A549 (cell line): ENCODE measurements at regions of chr15 and their contacts with region 1.

Region 1: DNA sequence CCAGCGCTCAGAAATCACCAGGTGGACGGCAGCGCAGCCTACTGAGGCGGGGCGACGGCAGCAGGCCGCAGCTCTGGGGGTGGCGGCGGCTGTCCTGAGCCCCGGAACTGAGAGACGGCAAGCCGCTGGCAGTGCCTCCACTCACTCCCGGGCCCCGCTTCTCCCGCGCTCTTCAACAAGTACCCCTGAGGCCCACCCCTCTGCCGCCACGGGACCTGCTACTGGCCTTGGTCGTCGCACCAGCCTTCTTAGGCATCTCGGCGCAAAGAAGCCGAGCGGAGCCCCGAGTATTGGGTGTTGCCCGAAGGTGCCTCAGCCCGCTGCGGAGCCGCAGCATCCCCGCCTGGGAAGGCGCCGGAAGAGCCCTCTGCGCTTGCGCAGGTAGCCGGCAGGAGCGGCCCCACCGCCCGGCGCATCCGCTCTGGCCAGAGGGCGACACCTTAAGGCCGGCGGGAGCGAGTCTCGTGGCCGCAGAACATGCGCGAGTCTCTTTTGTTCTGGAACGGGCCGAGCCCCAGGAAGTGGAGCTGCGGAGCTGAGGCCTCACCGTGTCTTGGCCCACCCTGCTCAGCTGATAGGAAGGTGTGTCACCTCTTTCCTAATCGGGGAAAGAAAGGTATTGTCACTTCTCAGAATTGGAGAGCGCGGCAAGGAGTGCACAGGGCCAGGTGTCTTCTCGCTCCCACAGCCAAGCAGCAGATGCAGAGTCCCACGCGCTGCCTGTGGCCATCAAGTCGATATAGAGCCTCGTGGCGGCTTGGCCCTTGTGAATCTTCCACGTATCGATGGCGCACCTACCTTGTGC is at the start of gene C15orf40:
- DNase-seq: peak; percentile 94 to 95
- ATAC-seq: peak; percentile 93 to 96
- H3K4me3 ChIP-seq: peak within 1 kb of the TSS; percentile 72
- H3K27ac ChIP-seq: peak within 1 kb of the TSS; percentile 78 to 92
- H3K4me1 ChIP-seq: peaks cover 26% of the 10 kb centered on the region
- CTCF ChIP-seq: peak; percentile 71
- EP300 ChIP-seq: no peak
- POLR2A ChIP-seq: peak; percentile 72
- RAD21 ChIP-seq: peak in 1 of 2 experiments; percentile 33; a peak in 1 of 5 replicates
- polyA plus RNA-seq, gene C15orf40: 48.0 and 54.1 TPM in 2 replicates

Region 2: DNA sequence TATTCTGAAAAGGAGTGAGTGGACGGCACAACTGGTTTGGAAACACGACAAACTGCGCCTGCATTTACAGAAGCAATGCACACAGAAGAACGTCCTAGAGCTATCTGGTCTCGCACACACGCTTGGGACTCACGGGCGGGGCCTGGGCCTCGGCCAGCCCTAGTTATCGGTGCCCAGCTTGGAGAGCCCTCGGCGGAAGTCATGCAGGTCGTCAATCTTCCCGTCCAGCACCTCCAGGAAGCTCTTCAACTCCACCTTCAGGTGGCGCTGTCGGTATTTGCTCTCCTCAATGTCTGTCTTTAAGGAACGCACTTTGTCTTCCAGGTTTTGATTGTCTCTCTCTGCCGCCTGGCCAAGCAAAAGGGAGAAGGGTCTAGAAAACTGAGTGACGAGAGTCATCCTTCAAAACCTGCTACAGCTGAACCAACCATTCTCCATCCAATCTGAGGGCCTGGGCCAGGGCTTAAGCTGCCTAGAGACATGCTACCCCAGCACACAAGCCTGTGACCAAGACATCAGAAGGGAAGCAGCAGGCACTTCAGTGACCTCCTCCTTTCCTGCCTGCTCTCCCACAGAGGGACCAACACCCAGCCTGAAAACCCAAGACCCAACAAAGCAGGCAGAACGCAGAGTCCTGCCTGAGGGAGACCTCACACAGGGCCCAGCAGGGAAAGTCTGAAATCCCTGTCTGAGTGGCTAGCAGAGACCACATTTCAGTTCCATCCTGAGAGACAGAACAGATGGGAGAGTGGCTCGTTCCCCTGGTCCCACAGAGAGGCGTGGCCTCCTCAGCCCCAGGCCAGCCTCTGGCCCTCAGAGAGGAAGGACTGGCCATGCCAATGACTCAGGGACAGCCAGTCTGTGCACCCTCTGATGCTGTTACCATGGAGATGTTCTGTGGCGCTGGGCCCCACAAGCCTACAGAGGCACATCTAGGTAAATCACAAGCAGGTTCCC is 161.6 kb before region 1 on chr15:
- CTCF ChIA-PET with region 1: interaction called, 17 read pairs
- POLR2A ChIA-PET with region 1: no interaction called
- DNase-seq: peak; percentile 57 to 87
- ATAC-seq: peak; percentile 67 to 93
- H3K4me3 ChIP-seq: no peak overlapping the region
- H3K27ac ChIP-seq: no peak overlapping the region
- H3K4me1 ChIP-seq: no peaks in the 10 kb centered on the region
- CTCF ChIP-seq: peak; percentile 59
- EP300 ChIP-seq: no peak
- POLR2A ChIP-seq: no peak
- RAD21 ChIP-seq: peak; percentile 62 to 79

Region 3: DNA sequence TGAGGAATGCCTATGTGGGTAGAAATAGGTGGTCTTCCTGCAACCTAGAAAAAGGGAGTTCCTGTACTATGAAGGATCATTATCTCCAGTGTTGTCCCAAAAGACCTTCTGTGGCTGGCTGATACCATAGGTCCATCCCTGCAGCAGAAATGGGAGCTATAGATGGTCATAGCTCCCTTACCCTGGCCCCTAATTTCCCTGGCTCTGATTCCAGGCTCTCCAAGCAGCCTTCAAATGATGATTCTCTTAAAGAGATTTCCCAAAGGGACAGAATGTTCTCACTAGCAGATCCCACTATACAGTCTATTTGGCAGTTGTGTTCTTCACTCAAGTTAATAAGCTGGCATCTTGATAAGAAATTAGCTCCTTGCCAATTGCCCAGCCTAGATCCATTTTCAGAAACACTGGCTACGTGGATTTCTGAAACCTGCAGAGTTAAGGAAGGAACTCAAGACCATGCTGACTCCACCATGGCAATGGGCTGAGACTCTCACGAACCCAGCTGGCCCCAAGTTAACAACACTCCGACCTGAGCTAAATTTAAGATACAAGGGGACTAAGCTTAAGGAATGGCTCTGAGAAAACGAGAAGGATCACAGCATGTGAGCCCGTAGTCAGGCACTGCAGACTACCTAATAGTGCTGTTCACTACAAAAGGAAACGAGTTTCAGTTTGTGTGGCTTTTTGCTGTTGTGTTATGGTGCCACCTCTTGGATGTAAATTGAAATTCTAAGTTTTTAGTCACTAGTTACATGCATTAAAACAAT is 11.4 kb before region 1 on chr15:
- CTCF ChIA-PET with region 1: interaction called, 38 read pairs
- POLR2A ChIA-PET with region 1: interaction called, 3 read pairs
- DNase-seq: peak; percentile 54 to 69
- ATAC-seq: peak; percentile 87 to 88
- H3K4me3 ChIP-seq: peak overlapping the region; percentile 30; the same call in 2 of the 3 replicates
- H3K27ac ChIP-seq: peak overlapping the region; percentile 46 to 61; a peak in 4 of 6 replicates
- H3K4me1 ChIP-seq: peaks cover 4% of the 10 kb centered on the region; the same call in 1 of the 3 replicates
- CTCF ChIP-seq: peak; percentile 88
- EP300 ChIP-seq: no peak
- POLR2A ChIP-seq: no peak
- RAD21 ChIP-seq: peak; percentile 86 to 90

Region 4: GRCh38 chr15:83066734-83067637 is 55.5 kb after region 1 on chr15 and contains the start of gene BTBD1:
- CTCF ChIA-PET with region 1: interaction called, 6 read pairs
- POLR2A ChIA-PET with region 1: interaction called, 15 read pairs
- DNase-seq: peak; percentile 95 to 99
- ATAC-seq: peak; percentile 96 to 97
- H3K4me3 ChIP-seq: peak within 1 kb of the TSS; percentile 80
- H3K27ac ChIP-seq: peak within 1 kb of the TSS; percentile 98
- H3K4me1 ChIP-seq: peaks cover 34% of the 10 kb centered on the region
- CTCF ChIP-seq: no peak; the same call in 2 of the 3 replicates
- EP300 ChIP-seq: no peak; a peak in 1 of 5 replicates
- POLR2A ChIP-seq: peak; percentile 97
- RAD21 ChIP-seq: peak in 1 of 2 experiments; percentile 32; a peak in 1 of 5 replicates
- polyA plus RNA-seq, gene BTBD1: 88.8 and 95.8 TPM in 2 replicates